ENCODE measurements at regions of chr1 and their contacts with region 1.

Region 1: DNA sequence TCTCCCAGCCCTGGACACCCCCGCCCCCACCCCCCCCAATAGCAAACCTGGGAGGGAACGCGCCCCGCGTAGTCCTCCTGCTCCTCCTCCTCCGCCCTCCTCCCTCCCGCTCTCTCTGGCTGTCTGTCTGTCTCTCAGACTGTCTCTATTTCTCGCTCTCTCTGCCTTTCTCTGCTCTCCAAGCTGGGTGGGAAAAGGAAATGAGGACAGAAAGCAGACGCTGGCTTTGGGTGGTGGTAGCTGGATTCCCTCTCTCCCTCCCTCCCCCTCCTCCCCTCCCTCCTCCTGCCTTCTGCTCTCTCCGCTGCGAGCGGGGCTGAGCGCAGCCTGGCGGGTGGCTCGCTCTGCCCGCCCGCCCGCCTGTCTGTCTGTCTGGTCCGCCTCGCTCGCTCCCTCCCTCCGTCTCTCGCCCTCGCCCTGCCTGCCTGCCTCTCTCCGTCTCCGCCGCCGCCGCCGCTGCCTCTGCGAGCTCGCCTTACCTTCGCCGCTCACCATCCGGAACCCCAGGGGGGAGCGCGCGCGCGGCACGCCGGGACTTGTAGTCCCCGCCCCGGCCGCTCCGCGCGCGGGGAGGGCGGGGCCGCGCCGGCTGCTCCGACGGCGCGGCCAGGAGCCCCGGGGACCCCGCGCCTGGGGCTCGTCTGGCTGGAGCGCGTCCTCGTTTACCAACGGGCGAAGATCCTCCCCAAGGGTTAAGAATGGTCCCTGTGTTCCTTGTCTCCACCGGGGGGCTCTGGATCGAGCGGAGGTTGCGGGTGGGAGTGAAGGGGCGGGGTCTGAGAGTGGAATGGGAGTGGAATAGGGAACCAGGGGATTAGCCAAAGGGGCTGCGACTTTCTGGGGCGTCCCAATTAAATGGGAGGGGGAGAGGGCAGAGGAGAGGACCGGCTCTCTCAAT is at the start of gene AHDC1:
- DNase-seq: peak; percentile 74 to 78 (median 78)
- H3K4me3 ChIP-seq: peak within 1 kb of the TSS; percentile 42 to 89 (median 66)
- H3K4me3 Mint-ChIP-seq: peak within 1 kb of the TSS; percentile 96 to 98
- H3K27ac ChIP-seq: peak within 1 kb of the TSS in 1 of 2 donors; percentile 40
- H3K27ac Mint-ChIP-seq: peak within 1 kb of the TSS; percentile 69 to 94 (median 85)
- H3K4me1 ChIP-seq: peaks cover 31 to 56% of the 10 kb centered on the region in 2 donors
- H3K4me1 Mint-ChIP-seq: peaks cover 48% of the 10 kb centered on the region
- H3K27me3 ChIP-seq: peaks cover 0 to 4% of the 10 kb centered on the region in 2 donors
- H3K27me3 Mint-ChIP-seq: peaks cover 7 to 26% (median 8%) of the 10 kb centered on the region in 3 donors
- CTCF ChIP-seq: no peak
- polyA plus RNA-seq, gene AHDC1: 0.16 to 3.3 (median 0.30) TPM

Region 2: DNA sequence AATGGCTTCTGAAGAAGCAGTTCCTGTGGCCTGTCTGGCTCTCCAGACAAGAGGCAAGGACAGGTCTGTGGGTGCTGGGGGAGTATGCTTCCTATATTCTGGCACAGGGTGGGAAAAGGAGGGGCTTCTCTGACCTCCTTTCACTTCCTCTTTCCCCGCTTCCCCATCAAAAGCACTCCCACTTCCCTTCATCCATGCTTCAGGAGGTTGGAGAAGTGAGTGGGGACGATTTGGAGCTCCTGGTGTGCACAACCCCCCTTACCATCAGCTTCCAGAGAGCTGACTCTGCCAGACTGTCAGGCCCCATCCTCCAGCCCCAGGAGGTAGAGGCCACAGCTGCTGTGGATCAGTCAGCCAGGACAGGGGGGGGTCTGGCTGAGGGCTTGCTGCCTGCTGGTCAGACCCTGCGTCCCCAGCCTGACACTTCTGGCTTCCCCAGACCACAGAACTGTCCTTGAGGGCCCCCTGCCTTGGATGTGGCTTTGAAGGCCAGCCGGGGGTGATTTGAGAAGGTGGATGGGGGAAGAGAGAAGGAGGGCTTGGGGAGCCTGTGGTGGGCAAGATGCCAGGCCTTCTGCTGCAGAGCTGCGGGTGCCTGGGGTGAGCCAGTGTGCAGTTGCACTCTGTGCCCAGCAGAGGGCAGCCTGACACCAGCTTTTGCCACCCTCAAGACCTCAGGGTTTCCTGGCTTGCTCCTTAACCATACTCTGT is 303.4 kb before region 1 on chr1:
- intact Hi-C with region 1: loop called (anchors 5 to 10 kb)
- DNase-seq: peak; percentile 76 to 83 (median 81)
- H3K4me3 ChIP-seq: peak overlapping the region in 1 of 3 experiments; percentile 27
- H3K4me3 Mint-ChIP-seq: no peak overlapping the region
- H3K27ac ChIP-seq: peak overlapping the region; percentile 75 to 84
- H3K27ac Mint-ChIP-seq: peak overlapping the region; percentile 72 to 92 (median 89)
- H3K4me1 ChIP-seq: peaks cover 25 to 26% of the 10 kb centered on the region in 2 donors
- H3K4me1 Mint-ChIP-seq: peaks cover 23% of the 10 kb centered on the region
- H3K27me3 ChIP-seq: no peaks in the 10 kb centered on the region
- H3K27me3 Mint-ChIP-seq: no peaks in the 10 kb centered on the region
- CTCF ChIP-seq: peak; percentile 98

Region 3: DNA sequence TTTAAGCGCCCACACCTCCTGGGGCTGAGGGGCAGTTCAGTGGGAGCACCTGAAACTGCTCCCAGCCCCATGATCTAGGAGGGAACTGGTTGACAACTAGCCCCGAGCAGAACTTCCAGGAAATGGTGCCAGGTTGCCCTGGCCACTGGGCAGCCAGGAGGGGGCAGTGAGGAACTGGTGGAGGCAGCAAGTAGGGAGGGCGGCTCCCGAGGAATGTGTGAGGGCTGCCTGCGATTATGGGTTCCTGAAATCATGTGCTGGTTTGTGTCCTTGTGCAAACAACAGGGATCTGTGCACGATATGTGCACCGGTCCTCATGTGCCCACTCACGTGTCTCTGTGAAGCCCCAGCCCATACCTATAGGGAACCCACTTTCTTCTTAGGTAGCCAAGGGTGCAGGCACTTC is 201.6 kb before region 1 on chr1:
- intact Hi-C with region 1: loop called in 1 of 2 experiments (anchors 5 kb)
- DNase-seq: peak; percentile 50 to 64 (median 56)
- H3K4me3 ChIP-seq: no peak overlapping the region
- H3K4me3 Mint-ChIP-seq: no peak overlapping the region
- H3K27ac ChIP-seq: peak overlapping the region in 1 of 2 donors; percentile 33
- H3K27ac Mint-ChIP-seq: peak overlapping the region in 3 of 7 donors; percentile 30 to 77 (median 69)
- H3K4me1 ChIP-seq: peaks cover 26 to 32% of the 10 kb centered on the region in 2 donors
- H3K4me1 Mint-ChIP-seq: peaks cover 38% of the 10 kb centered on the region
- H3K27me3 ChIP-seq: no peaks in the 10 kb centered on the region
- H3K27me3 Mint-ChIP-seq: peaks cover 0 to 5% (median 2%) of the 10 kb centered on the region in 3 donors
- CTCF ChIP-seq: peak; percentile 66

Region 4: DNA sequence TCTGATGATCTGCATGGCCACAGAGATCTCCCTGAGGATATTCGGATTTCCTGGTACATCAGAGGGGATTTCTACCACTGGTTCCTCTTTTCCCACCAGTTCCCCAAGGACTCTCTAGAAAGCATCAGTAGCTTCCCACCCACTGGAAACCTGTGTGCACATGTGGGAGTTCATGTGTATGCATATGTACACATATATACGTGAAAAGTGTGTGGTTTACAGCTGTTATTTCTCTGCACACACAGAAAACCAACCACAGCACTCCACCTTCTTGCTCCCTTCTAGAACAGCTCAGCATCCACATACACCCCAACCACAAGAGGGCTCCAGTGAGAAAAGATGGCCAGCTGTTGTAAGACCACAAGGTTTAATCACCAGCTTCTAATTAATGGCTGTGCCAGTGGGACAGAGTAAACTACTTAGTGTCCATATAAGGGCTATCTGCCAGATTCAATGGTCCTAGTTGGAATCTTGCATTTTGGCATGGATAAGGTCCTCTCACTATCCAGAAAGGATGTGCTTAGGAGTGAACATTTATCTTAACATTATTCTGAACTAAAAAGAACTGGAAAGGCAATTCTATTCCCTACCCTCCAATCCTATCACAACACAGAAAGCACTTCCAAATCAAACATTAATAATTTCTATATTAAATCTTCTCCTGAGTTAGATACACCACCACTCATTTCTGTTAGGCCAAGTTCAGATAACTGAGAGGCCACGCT is 187.4 kb before region 1 on chr1:
- intact Hi-C with region 1: loop called (anchors 2 to 10 kb)
- DNase-seq: peak; percentile 57 to 67 (median 58)
- H3K4me3 ChIP-seq: no peak overlapping the region
- H3K4me3 Mint-ChIP-seq: no peak overlapping the region
- H3K27ac ChIP-seq: peak overlapping the region in 1 of 2 donors; percentile 24
- H3K27ac Mint-ChIP-seq: peak overlapping the region in 4 of 7 donors; percentile 2 to 56 (median 35)
- H3K4me1 ChIP-seq: peaks cover 6 to 12% of the 10 kb centered on the region in 2 donors
- H3K4me1 Mint-ChIP-seq: peaks cover 17% of the 10 kb centered on the region
- H3K27me3 ChIP-seq: no peaks in the 10 kb centered on the region
- H3K27me3 Mint-ChIP-seq: no peaks in the 10 kb centered on the region
- CTCF ChIP-seq: peak; percentile 70

Region 5: GRCh38 chr1:27489910-27490741 is 113.8 kb before region 1 on chr1 and contains the start of gene WASF2:
- intact Hi-C with region 1: loop called in 1 of 2 experiments (anchors 10 kb)
- DNase-seq: peak; percentile 96 to 97 (median 97)
- H3K4me3 ChIP-seq: peak within 1 kb of the TSS; percentile 78 to 99 (median 99)
- H3K4me3 Mint-ChIP-seq: peak within 1 kb of the TSS; percentile 91 to 99
- H3K27ac ChIP-seq: peak within 1 kb of the TSS; percentile 88 to 99
- H3K27ac Mint-ChIP-seq: peak within 1 kb of the TSS; percentile 96 to 100 (median 99)
- H3K4me1 ChIP-seq: peaks cover 31 to 45% of the 10 kb centered on the region in 2 donors
- H3K4me1 Mint-ChIP-seq: peaks cover 45% of the 10 kb centered on the region
- H3K27me3 ChIP-seq: no peaks in the 10 kb centered on the region
- H3K27me3 Mint-ChIP-seq: peaks cover 0 to 6% (median 0%) of the 10 kb centered on the region in 3 donors
- CTCF ChIP-seq: no peak
- polyA plus RNA-seq, gene WASF2: 53.5 to 91.6 (median 86.4) TPM

Region 6: DNA sequence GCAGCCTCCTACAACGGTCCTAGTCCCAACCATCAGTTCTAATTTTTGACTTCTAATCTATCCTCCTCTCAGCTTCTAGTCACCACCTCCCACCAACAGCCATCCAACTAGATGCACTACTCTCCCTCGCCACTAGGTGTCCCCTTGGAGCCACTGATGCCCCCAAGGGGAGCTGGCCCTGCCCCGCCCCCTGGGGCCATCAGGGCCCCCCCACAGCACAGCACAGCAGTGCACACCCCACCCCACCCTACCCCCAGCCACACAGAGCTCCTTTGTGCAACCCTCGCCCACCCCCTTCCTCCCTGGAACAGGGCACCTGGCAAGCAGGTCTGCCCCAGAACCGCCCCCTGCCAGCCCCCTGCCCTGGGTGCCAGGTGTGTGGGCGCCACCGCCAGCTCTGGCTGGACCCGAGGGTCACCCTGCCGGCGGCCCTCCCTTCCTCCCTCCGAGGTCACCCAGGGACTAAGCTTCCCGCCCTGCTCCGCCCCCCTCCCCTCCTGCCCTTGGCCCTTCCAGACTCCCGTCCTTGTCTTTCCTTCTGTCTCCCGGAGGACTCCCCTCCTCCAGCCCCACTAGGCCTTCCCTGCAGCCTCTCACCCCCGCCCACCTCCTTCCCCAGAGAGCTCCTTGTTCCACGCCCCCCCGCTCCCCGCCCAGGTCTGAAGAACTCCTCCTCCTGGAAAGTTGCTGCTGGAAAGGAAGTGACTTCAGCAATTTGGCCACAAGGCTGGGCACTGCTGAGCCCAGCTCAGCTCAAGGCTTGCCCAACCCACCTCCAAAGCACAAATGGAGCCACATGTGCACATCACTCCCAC is 46.9 kb before region 1 on chr1:
- intact Hi-C with region 1: loop called (anchors 2 kb)
- DNase-seq: peak; percentile 81 to 83 (median 81)
- H3K4me3 ChIP-seq: peak overlapping the region; percentile 1 to 74 (median 29)
- H3K4me3 Mint-ChIP-seq: peak overlapping the region; percentile 61 to 74
- H3K27ac ChIP-seq: peak overlapping the region; percentile 14 to 17
- H3K27ac Mint-ChIP-seq: peak overlapping the region; percentile 73 to 90 (median 84)
- H3K4me1 ChIP-seq: peaks cover 21 to 22% of the 10 kb centered on the region in 2 donors
- H3K4me1 Mint-ChIP-seq: peaks cover 26% of the 10 kb centered on the region
- H3K27me3 ChIP-seq: no peaks in the 10 kb centered on the region
- H3K27me3 Mint-ChIP-seq: peaks cover 0 to 6% (median 4%) of the 10 kb centered on the region in 3 donors
- CTCF ChIP-seq: peak; percentile 99

Region 7: DNA sequence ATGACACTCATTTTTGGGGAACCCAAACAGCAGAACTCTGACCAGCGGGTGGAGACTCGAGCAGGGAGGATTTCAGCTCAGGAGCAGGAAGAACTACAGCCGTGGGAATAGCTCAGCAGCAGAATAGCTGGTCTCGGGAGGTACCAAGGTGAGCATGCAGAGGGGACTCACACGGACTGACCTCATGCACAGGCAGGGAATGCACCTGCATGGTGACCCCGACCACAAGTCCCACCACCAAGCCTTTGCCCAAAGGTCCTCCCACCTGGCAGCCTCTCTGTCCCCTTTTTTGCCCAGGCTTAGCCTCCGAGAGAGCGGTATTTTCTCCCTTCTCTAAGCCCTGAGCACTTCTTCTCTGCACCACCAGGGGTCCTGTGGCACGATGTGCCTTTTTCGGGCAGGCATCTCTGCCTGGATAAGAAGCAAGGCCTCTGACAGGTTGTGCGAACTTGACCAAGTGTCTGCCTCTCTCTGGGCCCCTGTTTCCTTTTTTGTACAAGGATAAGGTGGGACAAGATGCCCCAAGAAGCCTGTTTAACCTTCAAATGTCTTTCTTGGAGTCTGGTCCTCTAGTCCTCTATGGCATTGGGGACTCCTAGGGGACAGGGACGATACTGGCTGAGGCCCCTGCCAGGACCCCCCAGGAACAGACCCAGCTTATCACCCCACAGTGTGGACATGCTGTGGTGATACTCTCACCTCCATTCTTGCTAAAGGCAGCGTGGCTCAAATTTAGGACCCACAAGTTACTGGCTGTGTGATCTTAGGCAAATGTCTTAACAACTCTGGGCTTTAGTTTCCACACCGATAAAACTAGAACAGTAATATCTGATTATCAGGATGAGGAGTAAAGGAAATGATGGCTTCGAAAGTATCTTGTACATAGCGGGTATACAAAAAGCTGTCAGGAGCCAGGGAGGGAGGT is 40.0 kb after region 1 on chr1:
- intact Hi-C with region 1: loop called (anchors 5 kb)
- DNase-seq: peak; percentile 62 to 74 (median 65)
- H3K4me3 ChIP-seq: no peak overlapping the region
- H3K4me3 Mint-ChIP-seq: no peak overlapping the region
- H3K27ac ChIP-seq: no peak overlapping the region
- H3K27ac Mint-ChIP-seq: peak overlapping the region in 4 of 7 donors; percentile 66 to 82 (median 71)
- H3K4me1 ChIP-seq: peaks cover 22 to 32% of the 10 kb centered on the region in 2 donors
- H3K4me1 Mint-ChIP-seq: peaks cover 32% of the 10 kb centered on the region
- H3K27me3 ChIP-seq: no peaks in the 10 kb centered on the region
- H3K27me3 Mint-ChIP-seq: peaks cover 0 to 3% (median 2%) of the 10 kb centered on the region in 3 donors
- CTCF ChIP-seq: peak; percentile 74

Region 8: DNA sequence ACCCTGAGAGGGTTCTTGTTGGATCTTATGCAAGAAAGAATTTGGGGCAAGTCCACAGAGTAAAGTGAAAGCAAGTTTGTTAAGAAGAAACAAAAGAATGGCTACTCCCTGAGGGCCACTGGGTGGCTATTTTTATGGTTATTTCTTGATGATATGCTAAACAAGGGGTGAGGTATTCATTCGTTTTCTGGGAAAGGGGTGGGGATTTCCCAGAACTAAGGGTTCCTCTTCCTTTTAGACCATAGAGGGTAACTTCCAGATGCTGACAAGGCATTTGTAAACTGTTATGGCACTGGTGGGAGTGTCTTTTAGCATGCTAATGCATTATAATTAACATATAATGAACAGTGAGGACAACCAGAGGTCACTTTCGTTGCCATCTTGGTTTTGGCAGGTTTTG is 86.3 kb after region 1 on chr1:
- intact Hi-C with region 1: no loop called
- DNase-seq: peak in 1 of 3 donors; percentile 50
- H3K4me3 ChIP-seq: no peak overlapping the region
- H3K4me3 Mint-ChIP-seq: no peak overlapping the region
- H3K27ac ChIP-seq: no peak overlapping the region
- H3K27ac Mint-ChIP-seq: no peak overlapping the region
- H3K4me1 ChIP-seq: no peaks in the 10 kb centered on the region
- H3K4me1 Mint-ChIP-seq: peaks cover 3% of the 10 kb centered on the region
- H3K27me3 ChIP-seq: no peaks in the 10 kb centered on the region
- H3K27me3 Mint-ChIP-seq: peaks cover 2 to 6% (median 3%) of the 10 kb centered on the region in 3 donors
- CTCF ChIP-seq: no peak

Region 9: DNA sequence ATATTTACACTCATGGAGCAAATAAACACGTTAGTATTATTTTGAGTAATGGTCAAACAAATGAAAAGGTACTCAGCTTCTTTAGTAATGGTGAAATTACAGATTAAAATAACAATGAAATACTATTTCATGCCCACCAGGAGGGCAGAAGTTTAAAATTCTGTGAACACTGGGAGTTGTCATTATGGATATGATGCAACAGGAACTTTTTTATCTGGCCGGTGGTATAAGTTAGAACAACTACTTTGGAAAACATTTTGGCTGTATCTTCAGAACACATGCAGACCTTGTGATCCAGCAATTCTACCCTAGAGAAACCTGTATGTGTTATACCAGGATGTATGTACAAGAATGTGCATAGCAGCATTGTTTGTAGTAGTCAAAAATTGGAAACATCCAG is 203.5 kb after region 1 on chr1:
- intact Hi-C with region 1: no loop called
- DNase-seq: no peak
- H3K4me3 ChIP-seq: no peak overlapping the region
- H3K4me3 Mint-ChIP-seq: no peak overlapping the region
- H3K27ac ChIP-seq: no peak overlapping the region
- H3K27ac Mint-ChIP-seq: no peak overlapping the region
- H3K4me1 ChIP-seq: no peaks in the 10 kb centered on the region
- H3K4me1 Mint-ChIP-seq: no peaks in the 10 kb centered on the region
- H3K27me3 ChIP-seq: no peaks in the 10 kb centered on the region
- H3K27me3 Mint-ChIP-seq: no peaks in the 10 kb centered on the region
- CTCF ChIP-seq: no peak